A673 (cell line): ENCODE measurements at regions of chr10 and their contacts with region 1.

Region 1: GRCh38 chr10:89466599-89467035 is 52.2 kb downstream of the IFIT5 start:
- DNase-seq: peak; percentile 64
- H3K4me3 ChIP-seq: no peak overlapping the region
- H3K27ac ChIP-seq: no peak overlapping the region
- H3K4me1 ChIP-seq: peaks cover 32% of the 10 kb centered on the region
- H3K27me3 ChIP-seq: no peaks in the 10 kb centered on the region
- CTCF ChIP-seq: peak; percentile 66

Region 2: GRCh38 chr10:88944813-88945212 is 521.8 kb before region 1 on chr10:
- CTCF ChIA-PET with region 1: no interaction called
- POLR2A ChIA-PET with region 1: no interaction called
- intact Hi-C with region 1: no loop called
- DNase-seq: no peak
- H3K4me3 ChIP-seq: no peak overlapping the region
- H3K27ac ChIP-seq: peak overlapping the region; percentile 25
- H3K4me1 ChIP-seq: peaks cover 9% of the 10 kb centered on the region
- H3K27me3 ChIP-seq: no peaks in the 10 kb centered on the region
- CTCF ChIP-seq: no peak

Region 3: DNA sequence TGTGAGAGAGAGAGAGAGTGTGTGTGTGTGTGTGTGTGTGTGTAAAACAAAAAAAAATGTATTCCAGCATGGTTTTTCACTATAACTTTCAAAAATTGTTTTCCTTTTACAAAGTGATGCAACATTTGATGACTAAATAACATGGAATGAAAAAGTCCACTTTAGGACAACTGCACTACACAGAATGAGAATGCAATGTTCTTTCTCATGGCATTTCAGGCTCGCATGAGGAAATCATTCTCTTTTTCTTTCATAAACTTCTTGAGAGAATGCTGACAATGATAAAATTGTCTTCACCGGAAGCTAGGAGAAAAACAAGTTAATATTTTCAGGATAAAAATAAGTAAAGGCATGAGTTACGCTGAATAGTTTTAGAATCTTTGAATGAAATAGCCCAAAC is 15.0 kb after region 1 on chr10:
- CTCF ChIA-PET with region 1: interaction called, 11 read pairs
- POLR2A ChIA-PET with region 1: interaction called, 3 read pairs
- intact Hi-C with region 1: no loop called
- DNase-seq: peak; percentile 50
- H3K4me3 ChIP-seq: no peak overlapping the region
- H3K27ac ChIP-seq: peak overlapping the region; percentile 0
- H3K4me1 ChIP-seq: peaks cover 24% of the 10 kb centered on the region
- H3K27me3 ChIP-seq: no peaks in the 10 kb centered on the region
- CTCF ChIP-seq: no peak

Region 4: GRCh38 chr10:89540420-89540949 is 73.9 kb after region 1 on chr10:
- CTCF ChIA-PET with region 1: no interaction called
- POLR2A ChIA-PET with region 1: no interaction called
- intact Hi-C with region 1: no loop called
- DNase-seq: no peak
- H3K4me3 ChIP-seq: no peak overlapping the region
- H3K27ac ChIP-seq: no peak overlapping the region
- H3K4me1 ChIP-seq: no peaks in the 10 kb centered on the region
- H3K27me3 ChIP-seq: no peaks in the 10 kb centered on the region
- CTCF ChIP-seq: no peak

Region 5: DNA sequence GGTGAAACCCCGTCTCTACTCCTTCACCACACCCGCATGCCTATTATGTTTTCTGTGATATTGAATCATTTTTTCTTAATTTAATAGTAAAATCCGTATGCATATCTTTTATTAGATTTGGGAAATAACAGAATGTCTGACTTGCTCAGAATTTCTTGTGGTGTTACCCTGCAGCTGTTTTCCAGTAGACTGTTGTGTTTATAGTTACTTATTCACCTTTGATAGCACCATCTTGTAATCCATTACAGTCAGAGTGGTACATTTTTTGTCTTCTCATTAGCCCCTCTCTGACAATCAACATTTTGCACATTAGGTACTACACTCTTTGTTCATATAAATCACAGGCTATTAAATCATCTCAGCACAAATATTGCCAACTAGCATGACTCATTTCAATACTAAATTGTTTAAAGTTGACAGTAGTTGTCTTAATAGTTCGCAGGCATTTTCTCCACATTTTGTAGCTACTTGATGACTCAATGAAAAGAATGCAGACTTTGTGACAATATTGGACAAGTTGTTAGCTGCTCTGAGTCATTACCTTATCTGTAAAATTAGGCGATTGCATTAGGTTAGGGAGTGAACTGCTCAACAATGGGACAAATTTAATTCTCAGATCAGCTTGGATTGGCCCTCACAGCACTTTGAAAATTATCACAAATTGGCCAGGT is 86.6 kb after region 1 on chr10:
- CTCF ChIA-PET with region 1: no interaction called
- POLR2A ChIA-PET with region 1: no interaction called
- intact Hi-C with region 1: loop called (anchors 5 kb)
- DNase-seq: peak; percentile 76
- H3K4me3 ChIP-seq: no peak overlapping the region
- H3K27ac ChIP-seq: no peak overlapping the region
- H3K4me1 ChIP-seq: peaks cover 6% of the 10 kb centered on the region
- H3K27me3 ChIP-seq: no peaks in the 10 kb centered on the region
- CTCF ChIP-seq: no peak

Region 6: GRCh38 chr10:90378524-90379076 is 912.0 kb after region 1 on chr10:
- CTCF ChIA-PET with region 1: no interaction called
- POLR2A ChIA-PET with region 1: no interaction called
- intact Hi-C with region 1: no loop called
- DNase-seq: no peak
- H3K4me3 ChIP-seq: no peak overlapping the region
- H3K27ac ChIP-seq: no peak overlapping the region
- H3K4me1 ChIP-seq: no peaks in the 10 kb centered on the region
- H3K27me3 ChIP-seq: peaks cover 9% of the 10 kb centered on the region
- CTCF ChIP-seq: no peak